ENCODE measurements at regions of chr13 and their contacts with region 1.

Region 1: GRCh38 chr13:51814825-51815650 is 11.1 kb upstream of the DHRS12 start:
- DNase-seq: peak; percentile 88
- H3K4me3 Mint-ChIP-seq: peak overlapping the region; percentile 11
- H3K27ac Mint-ChIP-seq: peak overlapping the region; percentile 71
- H3K4me1 Mint-ChIP-seq: peaks cover 64% of the 10 kb centered on the region
- H3K27me3 Mint-ChIP-seq: no peaks in the 10 kb centered on the region

Region 2: GRCh38 chr13:51549050-51549449 is 266.0 kb before region 1 on chr13:
- CTCF ChIA-PET with region 1: no interaction called
- DNase-seq: no peak
- H3K4me3 Mint-ChIP-seq: no peak overlapping the region
- H3K27ac Mint-ChIP-seq: no peak overlapping the region
- H3K4me1 Mint-ChIP-seq: no peaks in the 10 kb centered on the region
- H3K27me3 Mint-ChIP-seq: peaks cover 4% of the 10 kb centered on the region

Region 3: GRCh38 chr13:51803422-51804294 is 11.4 kb before region 1 on chr13 and contains the start of gene DHRS12:
- CTCF ChIA-PET with region 1: interaction called, 31 read pairs
- DNase-seq: peak; percentile 91
- H3K4me3 Mint-ChIP-seq: peak within 1 kb of the TSS; percentile 93
- H3K27ac Mint-ChIP-seq: peak within 1 kb of the TSS; percentile 100
- H3K4me1 Mint-ChIP-seq: peaks cover 46% of the 10 kb centered on the region
- H3K27me3 Mint-ChIP-seq: no peaks in the 10 kb centered on the region

Region 4: GRCh38 chr13:51825165-51825592 is 10.1 kb after region 1 on chr13:
- CTCF ChIA-PET with region 1: interaction called, 61 read pairs
- DNase-seq: no peak
- H3K4me3 Mint-ChIP-seq: peak overlapping the region; percentile 82
- H3K27ac Mint-ChIP-seq: peak overlapping the region; percentile 100
- H3K4me1 Mint-ChIP-seq: peaks cover 96% of the 10 kb centered on the region
- H3K27me3 Mint-ChIP-seq: no peaks in the 10 kb centered on the region

Region 5: DNA sequence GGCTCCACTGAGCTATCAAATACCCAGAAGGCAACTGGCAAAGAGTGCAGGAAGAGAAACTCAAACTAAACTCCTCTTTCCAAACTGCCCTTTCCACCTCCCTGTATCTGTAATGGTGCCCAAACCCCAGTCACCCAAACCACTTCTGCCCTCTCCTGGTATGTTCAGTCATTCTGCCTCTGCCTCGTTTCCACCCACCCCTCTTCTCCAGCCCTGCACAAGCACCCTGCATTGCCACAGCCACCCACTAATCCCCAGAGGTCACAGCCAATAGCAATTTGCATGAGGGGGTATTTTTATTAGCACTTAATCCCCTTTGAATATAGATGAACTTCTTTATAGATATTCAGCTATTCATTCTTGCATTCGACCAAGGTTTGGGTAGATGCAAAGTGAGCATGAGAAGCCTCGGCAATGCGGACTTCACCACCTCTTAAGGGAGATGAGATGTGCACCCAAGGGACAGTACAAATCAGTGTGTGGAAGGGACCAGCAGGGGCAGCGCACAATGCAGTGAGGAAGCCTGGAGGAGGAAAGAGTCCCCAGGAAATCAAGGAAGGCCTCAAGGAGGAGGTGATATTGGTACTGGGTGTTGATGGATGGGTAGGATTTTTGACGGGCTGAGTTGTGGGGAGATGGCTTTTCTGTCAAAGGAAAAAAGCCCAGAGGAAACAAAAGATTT is 17.6 kb after region 1 on chr13:
- CTCF ChIA-PET with region 1: interaction called, 163 read pairs
- DNase-seq: peak; percentile 75
- H3K4me3 Mint-ChIP-seq: no peak overlapping the region
- H3K27ac Mint-ChIP-seq: peak overlapping the region; percentile 24
- H3K4me1 Mint-ChIP-seq: peaks cover 76% of the 10 kb centered on the region
- H3K27me3 Mint-ChIP-seq: peaks cover 19% of the 10 kb centered on the region

Region 6: DNA sequence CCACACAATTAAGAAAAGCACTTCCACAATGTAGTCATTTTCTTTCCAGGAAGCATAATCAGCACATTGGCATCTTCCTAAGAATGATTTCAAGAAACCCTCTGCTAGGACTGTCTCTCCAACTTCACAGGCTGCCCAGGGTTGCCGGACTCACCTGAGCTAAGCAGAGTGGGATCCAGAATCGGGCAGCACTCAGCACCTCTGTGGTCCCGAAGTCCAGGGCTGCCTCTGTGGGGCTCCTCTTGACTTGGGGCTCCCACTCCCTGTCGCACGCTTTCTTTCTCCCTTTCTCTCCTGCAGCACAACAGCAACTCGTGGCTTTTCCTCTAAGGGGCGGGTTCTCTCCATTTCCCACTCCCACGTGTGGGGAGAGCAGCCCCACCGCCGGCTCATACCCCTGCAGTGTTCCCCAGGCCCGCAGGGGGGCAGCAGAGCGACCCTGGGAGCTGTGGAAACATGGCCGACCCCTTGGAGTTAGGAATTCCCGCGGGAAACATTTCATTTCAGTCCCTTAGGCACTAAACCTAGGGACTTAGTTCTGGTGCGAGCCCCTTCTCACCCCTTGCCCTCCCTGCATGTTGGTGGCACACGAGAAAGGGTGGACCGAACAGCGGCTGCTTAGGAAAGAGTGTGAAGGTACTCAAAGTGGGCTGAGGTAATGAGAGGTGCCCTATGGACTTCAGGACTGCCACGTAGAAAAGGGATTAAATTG is 30.0 kb after region 1 on chr13 and contains the start of gene TMEM272:
- CTCF ChIA-PET with region 1: interaction called, 31 read pairs
- DNase-seq: peak; percentile 63
- H3K4me3 Mint-ChIP-seq: no peak within 1 kb of the TSS
- H3K27ac Mint-ChIP-seq: no peak within 1 kb of the TSS
- H3K4me1 Mint-ChIP-seq: peaks cover 11% of the 10 kb centered on the region
- H3K27me3 Mint-ChIP-seq: peaks cover 19% of the 10 kb centered on the region

Region 7: GRCh38 chr13:51895906-51896888 is 81.2 kb after region 1 on chr13:
- CTCF ChIA-PET with region 1: interaction called, 23 read pairs
- DNase-seq: peak; percentile 74
- H3K4me3 Mint-ChIP-seq: no peak overlapping the region
- H3K27ac Mint-ChIP-seq: no peak overlapping the region
- H3K4me1 Mint-ChIP-seq: peaks cover 4% of the 10 kb centered on the region
- H3K27me3 Mint-ChIP-seq: peaks cover 35% of the 10 kb centered on the region

Region 8: DNA sequence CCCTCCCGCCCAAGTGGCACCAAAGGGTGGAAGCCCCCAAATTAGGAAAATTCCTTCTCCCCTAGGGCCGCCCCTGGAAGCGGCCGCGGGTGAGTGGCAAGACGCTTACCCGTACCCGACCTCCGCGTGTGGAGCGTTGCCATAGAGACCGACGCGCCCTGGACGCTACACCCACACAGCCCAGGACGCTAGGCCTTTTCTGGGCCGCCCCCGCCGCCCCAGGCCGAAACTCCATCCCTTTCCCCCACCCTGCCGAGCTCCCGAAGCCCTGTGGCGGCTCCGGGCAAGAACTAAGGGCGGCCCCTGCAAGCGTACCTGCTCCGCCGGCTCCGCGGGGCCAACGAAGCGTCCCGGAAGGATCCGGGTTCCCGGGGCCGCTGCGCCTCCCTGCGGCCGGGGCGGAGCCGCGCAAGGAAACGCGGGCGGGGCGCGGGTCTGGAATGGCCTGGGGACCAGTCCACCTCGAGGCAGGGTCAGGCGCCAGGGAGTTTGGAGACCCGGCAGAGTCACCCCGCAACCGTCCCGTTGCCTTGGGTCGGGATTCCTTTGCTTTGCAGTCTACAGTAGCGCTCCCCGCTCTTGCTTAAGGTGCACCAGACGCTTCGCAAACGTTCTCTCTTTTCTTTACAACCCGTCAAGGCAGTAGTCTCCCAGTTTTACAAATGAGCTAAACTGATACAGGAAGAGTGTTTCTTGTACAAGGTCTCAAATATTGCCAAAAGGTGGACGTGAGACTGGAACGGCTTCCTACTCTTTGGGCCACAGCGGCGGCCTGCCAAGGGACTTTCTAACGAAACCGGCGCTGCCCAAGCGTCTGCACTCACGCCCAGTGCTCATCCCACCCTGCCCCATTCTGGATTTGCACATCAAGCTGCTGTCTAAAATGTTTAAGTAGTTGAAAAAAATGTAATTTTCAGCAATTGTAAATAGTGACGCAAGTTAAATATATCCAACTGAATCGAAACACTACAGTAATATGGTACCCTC is 314.0 kb after region 1 on chr13 and contains the start of gene NEK5:
- CTCF ChIA-PET with region 1: interaction called, 17 read pairs
- DNase-seq: peak; percentile 72
- H3K4me3 Mint-ChIP-seq: peak within 1 kb of the TSS; percentile 75
- H3K27ac Mint-ChIP-seq: no peak within 1 kb of the TSS
- H3K4me1 Mint-ChIP-seq: peaks cover 23% of the 10 kb centered on the region
- H3K27me3 Mint-ChIP-seq: peaks cover 25% of the 10 kb centered on the region

Region 9: DNA sequence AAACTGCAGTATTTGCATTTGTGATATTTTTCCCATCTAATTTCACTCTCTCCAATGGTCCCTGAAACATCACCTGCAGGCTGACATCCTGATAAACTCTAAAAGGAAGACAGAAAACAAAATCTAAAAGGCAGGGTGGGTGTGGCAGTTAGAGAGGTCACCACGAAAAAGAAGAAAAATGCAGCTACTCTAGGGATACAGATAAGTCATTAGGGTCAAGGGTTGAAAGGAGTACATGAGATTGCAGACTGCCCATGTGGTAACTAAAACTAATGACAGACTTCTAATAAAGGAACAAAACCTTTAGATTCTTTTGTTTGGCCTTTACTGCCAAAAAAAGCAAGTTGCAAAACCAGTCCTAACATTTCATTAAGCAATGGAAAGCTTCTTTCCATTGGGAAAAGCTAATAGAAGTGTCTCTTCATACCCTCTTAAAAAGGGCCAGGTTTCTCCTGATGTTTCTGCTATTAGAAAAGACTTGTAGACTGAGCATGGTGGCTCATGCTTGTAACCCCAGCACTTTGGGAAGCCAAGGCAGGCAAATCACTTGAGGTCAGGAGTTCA is 559.9 kb after region 1 on chr13:
- CTCF ChIA-PET with region 1: no interaction called
- DNase-seq: no peak
- H3K4me3 Mint-ChIP-seq: no peak overlapping the region
- H3K27ac Mint-ChIP-seq: no peak overlapping the region
- H3K4me1 Mint-ChIP-seq: no peaks in the 10 kb centered on the region
- H3K27me3 Mint-ChIP-seq: no peaks in the 10 kb centered on the region

Measured in activated naive CD4-positive, alpha-beta T cell treated with anti-CD3 and anti-CD28 coated beads, Interleukin-2, amount 10 ng/mL, durations not matched to agents 7 days and 5 days (primary cell).